Panc1 (cell line): ENCODE measurements at regions of chr7 and their contacts with region 1.

Region 1: DNA sequence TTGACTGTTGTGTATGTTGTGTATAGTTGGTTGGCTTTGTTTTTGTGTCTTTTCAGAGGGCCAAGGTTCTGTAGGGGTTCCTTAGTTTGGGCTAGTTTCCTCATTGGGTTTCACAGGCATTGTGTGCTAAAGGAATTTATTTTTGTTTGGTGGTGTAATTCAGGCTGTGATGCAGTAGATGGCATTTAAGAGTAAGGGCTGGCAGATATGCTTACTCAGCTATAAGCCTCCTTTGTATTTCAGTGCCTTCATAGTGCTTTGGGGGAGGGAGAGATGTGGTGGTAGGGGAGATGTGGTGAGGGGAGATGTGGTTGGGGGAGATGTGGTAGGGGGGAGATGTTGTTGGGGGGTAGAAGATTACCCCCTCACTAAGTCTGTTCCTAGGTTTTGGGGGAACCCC is 91.7 kb downstream of the SLC25A40 start:
- DNase-seq: no peak
- ATAC-seq: no peak
- H3K4me3 ChIP-seq: no peak overlapping the region
- H3K27ac ChIP-seq: no peak overlapping the region
- H3K4me1 ChIP-seq: no peaks in the 10 kb centered on the region
- H3K27me3 ChIP-seq: no peaks in the 10 kb centered on the region
- CTCF ChIP-seq: peak; percentile 41

Region 2: GRCh38 chr7:87345166-87345927 is 439.1 kb before region 1 on chr7 and contains the start of gene CROT:
- CTCF ChIA-PET with region 1: no interaction called
- POLR2A ChIA-PET with region 1: interaction called, 11 read pairs
- in situ Hi-C with region 1: no loop called
- intact Hi-C with region 1: no loop called
- DNase-seq: peak; percentile 74
- ATAC-seq: peak; percentile 100
- H3K4me3 ChIP-seq: peak within 1 kb of the TSS; percentile 58 to 87
- H3K27ac ChIP-seq: peak within 1 kb of the TSS; percentile 91
- H3K4me1 ChIP-seq: peaks cover 12% of the 10 kb centered on the region; the same call in 1 of the 2 replicates
- H3K27me3 ChIP-seq: no peaks in the 10 kb centered on the region
- CTCF ChIP-seq: no peak
- total RNA-seq, gene CROT: 9.8 TPM

Region 3: DNA sequence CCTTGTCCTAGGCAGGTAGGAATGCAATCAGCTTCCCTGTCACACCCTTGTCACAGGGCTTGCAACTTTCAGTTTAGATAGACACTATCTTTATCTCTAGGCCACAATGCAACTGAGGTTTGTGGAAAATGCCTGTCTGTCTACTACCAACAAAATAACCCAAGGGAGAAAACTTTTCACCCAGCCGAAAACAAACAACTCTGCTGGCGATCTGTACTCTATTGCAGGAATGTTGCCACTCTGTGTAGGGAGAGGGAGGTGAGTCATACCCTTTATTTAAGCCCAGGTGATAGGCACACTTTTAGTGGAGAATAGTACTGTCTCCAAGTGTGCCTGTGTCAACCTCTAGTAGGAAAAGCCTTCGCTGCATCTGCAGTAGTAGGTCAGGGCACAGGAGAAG is 16.6 kb before region 1 on chr7:
- CTCF ChIA-PET with region 1: no interaction called
- POLR2A ChIA-PET with region 1: no interaction called
- in situ Hi-C with region 1: no loop called
- intact Hi-C with region 1: no loop called
- DNase-seq: no peak
- ATAC-seq: no peak
- H3K4me3 ChIP-seq: no peak overlapping the region
- H3K27ac ChIP-seq: no peak overlapping the region
- H3K4me1 ChIP-seq: no peaks in the 10 kb centered on the region
- H3K27me3 ChIP-seq: no peaks in the 10 kb centered on the region
- CTCF ChIP-seq: no peak